ENCODE measurements at regions of chr1 and their contacts with region 1.

Region 1: DNA sequence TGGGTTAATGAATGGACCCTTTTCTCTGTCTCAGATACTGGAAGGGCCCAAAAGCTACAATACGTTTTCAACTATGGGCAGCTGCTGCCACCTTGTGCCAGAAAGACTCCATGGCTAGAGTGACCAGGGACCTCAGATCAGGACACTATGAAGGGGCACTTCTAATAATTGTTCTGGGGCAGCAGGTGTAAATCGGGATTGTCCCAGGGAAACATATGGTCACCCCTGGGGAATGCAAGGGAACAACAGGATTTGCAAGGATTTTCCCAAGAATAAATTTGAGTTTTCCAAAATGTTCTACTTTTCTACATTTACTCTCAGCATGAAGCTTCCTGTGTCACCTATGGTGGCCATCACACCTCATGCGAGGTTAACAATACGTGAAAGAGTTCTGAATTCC is 12.0 kb upstream of the FCAMR start:
- DNase-seq: peak; percentile 75
- ATAC-seq: peak; percentile 82
- H3K4me3 Mint-ChIP-seq: no peak overlapping the region
- H3K27ac Mint-ChIP-seq: no peak overlapping the region
- H3K4me1 Mint-ChIP-seq: no peaks in the 10 kb centered on the region
- H3K27me3 Mint-ChIP-seq: peaks cover 32% of the 10 kb centered on the region

Region 2: DNA sequence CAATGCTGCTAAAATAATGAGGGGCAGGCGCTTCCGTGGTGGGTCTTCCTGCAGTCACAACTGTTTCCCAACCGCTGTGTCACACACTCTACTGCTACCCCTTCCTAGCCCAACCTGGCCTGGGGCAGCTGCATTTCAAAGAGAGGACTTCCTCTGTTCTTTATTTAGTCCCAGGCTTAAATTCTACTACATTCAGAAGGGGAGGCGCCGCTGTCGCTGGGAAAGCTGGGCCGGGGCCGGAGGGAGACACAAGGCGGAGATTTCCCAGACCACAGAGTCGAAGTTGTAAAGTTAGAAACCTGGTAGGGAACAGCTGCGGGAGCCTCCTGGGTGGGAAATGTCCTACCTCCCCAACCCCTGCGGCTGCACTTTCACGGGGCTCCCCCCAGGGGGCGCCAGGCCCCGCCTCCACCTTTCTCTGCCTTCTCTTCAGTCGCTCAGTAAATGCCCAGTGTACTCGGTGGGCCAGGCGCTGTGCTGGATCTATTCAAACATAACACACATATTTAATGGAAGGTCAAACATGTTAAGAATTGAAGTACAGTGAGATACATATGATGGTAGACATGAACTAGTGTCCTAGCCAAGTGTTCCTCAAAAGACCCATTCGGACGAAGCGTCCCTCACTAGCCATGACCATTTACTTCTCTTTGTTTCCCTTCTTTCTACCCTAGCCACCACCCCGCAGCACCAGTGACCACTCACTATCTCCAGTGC is 323.8 kb before region 1 on chr1:
- CTCF ChIA-PET with region 1: interaction called, 25 read pairs
- POLR2A ChIA-PET with region 1: no interaction called
- DNase-seq: peak; percentile 71
- ATAC-seq: peak; percentile 84
- H3K4me3 Mint-ChIP-seq: no peak overlapping the region
- H3K27ac Mint-ChIP-seq: no peak overlapping the region
- H3K4me1 Mint-ChIP-seq: peaks cover 21% of the 10 kb centered on the region
- H3K27me3 Mint-ChIP-seq: peaks cover 34% of the 10 kb centered on the region

Region 3: DNA sequence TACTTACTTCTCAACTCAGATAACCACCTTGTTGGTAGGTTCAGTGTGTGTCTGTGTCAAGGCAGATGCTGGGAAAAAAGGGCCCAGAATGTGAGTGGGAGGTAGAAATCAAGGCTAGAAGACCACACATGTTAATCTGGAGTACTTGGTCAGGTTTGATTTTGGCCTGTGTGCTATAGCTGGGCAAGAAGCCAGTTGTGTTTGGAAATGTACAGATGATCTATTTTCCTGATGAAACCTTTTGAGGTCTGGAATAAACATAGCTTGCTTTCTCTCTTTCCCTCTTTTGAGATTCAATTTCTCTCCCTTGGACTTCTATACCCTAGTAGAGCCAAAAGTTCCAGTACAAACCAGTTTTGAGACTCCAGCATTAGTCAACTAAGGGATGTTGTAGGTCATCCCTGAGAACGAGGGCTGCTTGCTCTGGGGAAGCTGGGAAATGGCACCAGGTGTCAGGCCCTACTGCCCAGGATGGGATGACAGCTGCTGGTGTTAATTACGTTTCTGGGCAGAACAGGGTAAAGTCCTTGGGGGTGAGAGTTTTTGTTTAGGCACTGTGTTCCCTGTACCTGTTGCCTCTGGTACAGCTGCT is 281.7 kb before region 1 on chr1:
- CTCF ChIA-PET with region 1: no interaction called
- POLR2A ChIA-PET with region 1: no interaction called
- DNase-seq: no peak
- ATAC-seq: no peak
- H3K4me3 Mint-ChIP-seq: no peak overlapping the region
- H3K27ac Mint-ChIP-seq: no peak overlapping the region
- H3K4me1 Mint-ChIP-seq: peaks cover 59% of the 10 kb centered on the region
- H3K27me3 Mint-ChIP-seq: no peaks in the 10 kb centered on the region

Region 4: DNA sequence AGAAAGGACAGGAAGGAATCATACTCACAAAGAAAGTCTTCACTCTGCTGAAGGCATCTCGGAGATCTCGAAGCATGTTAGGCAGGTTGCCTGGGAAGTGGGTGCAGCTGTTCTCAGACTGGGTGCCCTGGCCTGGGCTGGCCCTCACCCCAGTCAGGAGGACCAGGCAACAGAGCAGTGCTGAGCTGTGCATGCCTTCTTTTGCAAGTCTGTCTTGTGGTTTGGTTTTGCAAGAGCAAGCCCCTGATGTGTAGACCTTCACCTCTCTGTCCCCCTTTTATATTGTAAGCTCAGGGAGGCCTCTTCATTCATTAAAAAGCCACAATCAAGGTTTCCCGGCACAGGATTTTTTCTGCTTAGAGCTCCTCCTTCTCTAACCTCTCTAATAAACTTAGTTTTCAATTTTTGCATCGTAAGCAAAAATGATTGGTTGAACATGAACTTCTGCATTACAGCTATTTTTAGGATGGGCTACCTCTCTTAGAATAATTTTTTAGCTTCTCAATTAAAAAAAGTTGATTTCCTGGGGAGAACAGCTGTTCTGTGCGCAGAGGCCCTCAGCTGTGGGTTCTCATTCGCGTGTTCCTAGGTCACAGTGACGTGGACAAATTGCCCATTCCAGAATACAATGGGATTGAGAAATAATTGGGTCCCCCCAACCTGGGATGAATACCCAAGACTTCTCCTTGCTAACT is 209.8 kb before region 1 on chr1 and contains the start of gene IL10:
- CTCF ChIA-PET with region 1: interaction called, 11 read pairs
- POLR2A ChIA-PET with region 1: no interaction called
- DNase-seq: no peak
- ATAC-seq: no peak
- H3K4me3 Mint-ChIP-seq: no peak within 1 kb of the TSS
- H3K27ac Mint-ChIP-seq: peak within 1 kb of the TSS; percentile 67
- H3K4me1 Mint-ChIP-seq: peaks cover 67% of the 10 kb centered on the region
- H3K27me3 Mint-ChIP-seq: peaks cover 36% of the 10 kb centered on the region
- total RNA-seq, gene IL10: 0.32 TPM in 1 of 2 experiments, not detected in the other

Region 5: GRCh38 chr1:206865013-206865671 is 117.1 kb before region 1 on chr1 and contains the start of gene IL20:
- CTCF ChIA-PET with region 1: interaction called, 17 read pairs
- POLR2A ChIA-PET with region 1: no interaction called
- DNase-seq: peak; percentile 85
- ATAC-seq: peak; percentile 82
- H3K4me3 Mint-ChIP-seq: no peak within 1 kb of the TSS
- H3K27ac Mint-ChIP-seq: no peak within 1 kb of the TSS
- H3K4me1 Mint-ChIP-seq: peaks cover 6% of the 10 kb centered on the region
- H3K27me3 Mint-ChIP-seq: peaks cover 42% of the 10 kb centered on the region
- total RNA-seq, gene IL20: not detected

Region 6: DNA sequence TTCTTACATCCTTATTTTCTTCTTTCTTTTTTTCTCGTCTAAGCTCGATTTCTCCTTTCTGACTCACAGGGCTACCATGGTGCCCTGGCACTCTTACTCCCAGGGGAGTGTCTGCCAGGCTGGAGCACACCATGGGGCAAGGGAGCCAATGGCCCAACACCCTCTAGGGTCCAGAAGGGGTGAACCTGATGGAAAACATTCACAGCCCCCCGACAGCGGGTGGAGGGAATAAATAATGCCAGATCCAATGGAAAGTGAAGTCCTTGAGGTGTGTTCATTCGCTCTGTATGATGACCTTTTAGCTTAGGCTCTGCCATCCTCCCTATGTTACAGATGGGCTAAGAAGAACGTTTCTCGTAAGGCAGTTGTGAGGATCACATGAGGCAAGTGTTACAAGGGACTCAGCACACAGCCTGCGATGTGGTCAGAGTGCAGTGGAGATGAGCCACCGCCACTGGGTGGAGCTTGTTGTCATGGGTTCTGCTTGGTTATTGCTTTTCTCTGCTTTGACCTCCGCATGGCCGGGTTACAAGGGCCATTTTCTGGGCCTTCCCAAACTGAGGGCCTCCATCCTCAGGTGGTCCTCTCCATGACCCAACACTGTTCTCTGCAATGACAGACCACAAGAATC is 57.0 kb before region 1 on chr1:
- CTCF ChIA-PET with region 1: interaction called, 281 read pairs
- POLR2A ChIA-PET with region 1: interaction called, 3 read pairs
- DNase-seq: peak; percentile 86
- ATAC-seq: peak; percentile 72
- H3K4me3 Mint-ChIP-seq: no peak overlapping the region
- H3K27ac Mint-ChIP-seq: no peak overlapping the region
- H3K4me1 Mint-ChIP-seq: peaks cover 29% of the 10 kb centered on the region
- H3K27me3 Mint-ChIP-seq: no peaks in the 10 kb centered on the region

Region 7: GRCh38 chr1:206962272-206962671 is 19.9 kb before region 1 on chr1:
- CTCF ChIA-PET with region 1: interaction called, 71 read pairs
- POLR2A ChIA-PET with region 1: interaction called, 3 read pairs
- DNase-seq: peak; percentile 28
- ATAC-seq: peak; percentile 79
- H3K4me3 Mint-ChIP-seq: no peak overlapping the region
- H3K27ac Mint-ChIP-seq: peak overlapping the region; percentile 40
- H3K4me1 Mint-ChIP-seq: peaks cover 45% of the 10 kb centered on the region
- H3K27me3 Mint-ChIP-seq: no peaks in the 10 kb centered on the region

Region 8: DNA sequence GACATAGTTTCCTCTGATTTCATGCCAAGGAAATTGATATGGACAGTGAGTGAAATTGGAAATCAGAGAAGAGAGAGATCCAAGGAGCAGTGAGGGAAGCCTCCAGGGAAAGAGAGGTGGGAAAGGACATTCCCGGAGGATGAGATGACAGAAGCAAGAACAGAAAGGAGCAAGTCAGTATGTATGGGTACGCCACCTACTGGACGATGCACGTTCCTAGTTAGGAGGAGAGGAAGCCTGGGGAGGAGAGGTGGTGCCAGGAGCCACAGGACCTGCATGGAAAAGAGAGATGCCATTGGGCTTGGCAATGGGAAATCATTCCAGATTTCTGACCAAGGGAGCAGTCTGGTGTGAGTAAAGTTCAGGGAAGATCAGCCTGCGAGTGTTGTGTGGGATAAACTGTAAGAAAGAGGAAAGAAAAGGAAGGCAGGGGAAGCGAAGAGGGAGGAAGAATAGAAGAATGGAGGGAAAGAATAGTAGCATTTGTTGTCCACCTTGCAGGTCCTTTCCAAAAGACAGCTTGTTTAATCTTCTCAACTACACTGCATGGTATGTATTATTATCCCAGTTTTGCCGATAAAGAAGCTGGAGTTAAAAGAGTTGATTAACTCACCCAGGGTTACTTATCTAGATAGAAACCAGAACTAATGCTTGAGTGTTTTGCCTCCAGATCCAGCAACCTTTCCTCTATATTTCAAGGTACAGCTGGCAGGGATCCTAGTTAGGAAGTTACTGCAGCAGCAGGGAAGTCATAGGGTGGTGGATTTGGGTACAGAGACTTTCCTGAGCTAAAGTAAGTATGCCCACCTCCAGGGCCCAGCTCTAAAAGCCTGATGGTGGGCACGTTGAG is 23.0 kb after region 1 on chr1:
- CTCF ChIA-PET with region 1: interaction called, 16 read pairs
- POLR2A ChIA-PET with region 1: no interaction called
- DNase-seq: peak; percentile 60
- ATAC-seq: peak; percentile 74
- H3K4me3 Mint-ChIP-seq: no peak overlapping the region
- H3K27ac Mint-ChIP-seq: no peak overlapping the region
- H3K4me1 Mint-ChIP-seq: no peaks in the 10 kb centered on the region
- H3K27me3 Mint-ChIP-seq: peaks cover 33% of the 10 kb centered on the region

Measured in activated CD8-positive, alpha-beta T cell treated with anti-CD3 and anti-CD28 coated beads, Interleukin-2, amount 10 ng/mL, durations not matched to agents 7 days and 5 days (primary cell).